ENCODE measurements at regions of chr5 and their contacts with region 1.

Region 1: DNA sequence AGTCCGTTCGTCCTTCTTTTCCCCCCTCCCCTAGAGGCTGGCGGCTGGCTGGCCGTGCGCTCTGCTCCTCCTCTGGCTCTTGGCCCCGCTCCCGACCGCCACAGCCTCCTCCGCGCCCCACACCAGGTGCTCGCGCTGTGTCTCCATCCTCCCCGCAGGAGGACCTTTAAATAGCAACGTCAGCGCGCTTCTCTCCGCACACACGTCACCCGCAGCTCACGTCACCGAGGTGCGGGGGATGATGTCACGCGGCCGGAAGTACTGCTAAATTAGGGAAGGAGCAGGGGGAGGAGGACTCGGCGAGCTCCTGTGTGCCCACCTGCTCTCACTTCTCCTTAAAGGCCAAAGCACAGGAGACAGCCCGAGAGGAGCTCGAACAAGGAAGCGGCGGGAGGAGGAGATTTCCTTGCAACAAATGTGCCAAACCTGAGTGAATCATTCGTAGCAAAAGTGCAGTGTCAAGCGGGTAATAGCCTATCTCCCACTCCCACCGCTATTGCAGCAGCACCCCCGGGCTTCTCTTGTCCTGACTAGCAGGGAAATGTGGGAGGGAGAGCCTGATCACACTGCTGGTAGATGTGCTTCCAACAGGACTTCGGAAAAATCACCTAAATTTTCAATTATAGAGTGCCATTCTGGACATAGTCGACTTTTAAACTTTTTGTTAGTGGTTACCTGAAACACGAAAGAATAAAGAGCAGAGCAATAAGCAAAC is 614 bp upstream of the HOMER1 start:
- DNase-seq: peak; percentile 89 to 91
- ATAC-seq: peak; percentile 86 to 92 (median 90)
- H3K4me3 ChIP-seq: peak overlapping the region; percentile 57 to 92 (median 81)
- H3K27ac ChIP-seq: peak overlapping the region; percentile 65 to 99 (median 94)
- H3K4me1 ChIP-seq: peaks cover 0 to 30% (median 10%) of the 10 kb centered on the region in 9 donors
- H3K27me3 ChIP-seq: peaks cover 0 to 41% (median 22%) of the 10 kb centered on the region in 7 donors
- CTCF ChIP-seq: no peak

Region 2: GRCh38 chr5:79235634-79236363 is 278.7 kb before region 1 on chr5 and contains the start of gene JMY:
- intact Hi-C with region 1: loop called in 3 of 10 experiments (anchors 2 to 10 kb)
- DNase-seq: peak; percentile 85 to 86
- ATAC-seq: peak; percentile 89 to 97 (median 93)
- H3K4me3 ChIP-seq: peak within 1 kb of the TSS; percentile 51 to 95 (median 86)
- H3K27ac ChIP-seq: peak within 1 kb of the TSS; percentile 77 to 93 (median 84)
- H3K4me1 ChIP-seq: peaks cover 0 to 39% (median 23%) of the 10 kb centered on the region in 9 donors
- H3K27me3 ChIP-seq: peaks cover 0 to 5% (median 0%) of the 10 kb centered on the region in 7 donors
- CTCF ChIP-seq: peak in 2 of 9 donors; percentile 34 to 37
- total RNA-seq, gene JMY: 7.2 to 18.1 (median 14.1) TPM

Region 3: DNA sequence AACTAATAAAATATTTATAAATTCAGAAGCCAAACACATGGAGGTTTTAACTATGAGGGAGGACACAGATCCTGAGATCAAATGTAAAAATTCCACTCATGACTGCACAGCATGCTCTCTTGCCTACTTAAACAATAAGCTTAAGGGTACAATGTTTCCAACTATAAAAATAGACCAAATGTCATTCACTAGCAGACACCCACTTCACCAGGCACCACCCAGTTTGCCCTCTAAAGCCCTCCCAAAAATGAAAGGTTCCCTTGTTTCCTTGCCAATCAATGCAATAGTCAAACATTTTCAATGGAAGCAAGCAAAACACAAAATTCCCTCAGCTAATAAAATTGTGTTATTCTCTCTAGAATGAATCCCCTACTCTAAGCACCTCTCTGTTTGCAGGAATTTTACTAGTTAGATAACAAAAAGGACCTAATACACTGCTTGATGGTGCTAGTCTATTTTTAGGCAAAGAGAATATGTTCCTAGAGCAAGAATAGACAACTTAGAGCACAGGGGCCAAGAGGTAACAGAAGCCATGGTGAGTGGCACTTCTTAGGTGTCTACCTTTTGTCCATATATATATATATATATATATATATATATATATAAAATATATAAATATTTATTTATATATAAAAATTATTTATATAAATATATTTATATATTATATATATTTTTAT is 135.9 kb before region 1 on chr5:
- intact Hi-C with region 1: loop called in 2 of 10 experiments (anchors 5 kb)
- DNase-seq: peak in 1 of 2 donors; percentile 9
- ATAC-seq: peak; percentile 74 to 98 (median 91)
- H3K4me3 ChIP-seq: no peak overlapping the region
- H3K27ac ChIP-seq: peak overlapping the region in 9 of 10 donors; percentile 49 to 82 (median 67)
- H3K4me1 ChIP-seq: peaks cover 0 to 14% (median 0%) of the 10 kb centered on the region in 9 donors
- H3K27me3 ChIP-seq: no peaks in the 10 kb centered on the region
- CTCF ChIP-seq: no peak

Region 4: DNA sequence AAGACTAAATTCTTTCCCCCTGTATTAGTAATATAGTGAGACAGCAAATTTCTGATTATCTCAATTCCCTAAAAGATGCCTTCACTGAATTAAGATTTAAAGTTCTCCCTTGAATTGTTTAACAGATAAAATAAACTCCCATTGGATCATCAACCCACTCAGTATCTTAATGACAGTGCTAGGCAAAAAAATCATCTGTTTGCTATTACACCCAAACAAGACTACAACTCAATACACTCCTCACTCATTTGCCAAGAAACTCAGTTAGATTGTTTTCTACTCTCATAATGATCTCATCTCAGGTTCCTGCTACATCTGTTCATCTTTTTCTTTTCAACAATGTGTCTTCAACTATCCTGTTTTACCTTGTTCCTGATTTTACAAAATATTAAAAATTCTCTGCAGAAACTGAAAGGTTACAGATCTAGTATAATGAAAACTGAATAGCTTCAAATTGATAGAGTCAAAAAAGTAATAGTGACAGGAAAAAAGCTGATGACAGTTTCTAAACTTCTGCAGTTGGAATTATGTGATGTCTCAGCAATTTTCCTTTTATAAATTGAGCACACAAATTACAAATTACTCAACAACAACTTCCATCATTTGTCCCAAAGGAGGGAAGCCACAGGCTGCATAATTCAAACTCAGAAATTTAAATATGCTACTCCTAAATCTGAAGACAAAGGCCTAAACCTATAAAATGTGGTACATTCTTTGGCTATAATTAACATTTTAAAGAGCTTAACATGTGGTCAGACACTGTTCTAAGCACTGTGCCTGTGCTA is 40.0 kb before region 1 on chr5:
- intact Hi-C with region 1: loop called in 1 of 10 experiments (anchors 5 kb)
- DNase-seq: no peak
- ATAC-seq: no peak
- H3K4me3 ChIP-seq: no peak overlapping the region
- H3K27ac ChIP-seq: peak overlapping the region in 4 of 10 donors; percentile 7 to 35 (median 13)
- H3K4me1 ChIP-seq: peaks cover 0 to 41% (median 15%) of the 10 kb centered on the region in 9 donors
- H3K27me3 ChIP-seq: no peaks in the 10 kb centered on the region
- CTCF ChIP-seq: no peak